ENCODE measurements at regions of chr11 and their contacts with region 1.

Region 1: GRCh38 chr11:94543695-94544645 is at the start of gene FUT4:
- DNase-seq: peak; percentile 94
- H3K4me3 Mint-ChIP-seq: peak within 1 kb of the TSS; percentile 82
- H3K27ac Mint-ChIP-seq: peak within 1 kb of the TSS; percentile 85
- H3K4me1 Mint-ChIP-seq: peaks cover 31% of the 10 kb centered on the region
- H3K27me3 Mint-ChIP-seq: no peaks in the 10 kb centered on the region
- CTCF ChIP-seq: no peak
- total RNA-seq, gene FUT4: 28.6 and 32.9 TPM in 2 replicates

Region 2: DNA sequence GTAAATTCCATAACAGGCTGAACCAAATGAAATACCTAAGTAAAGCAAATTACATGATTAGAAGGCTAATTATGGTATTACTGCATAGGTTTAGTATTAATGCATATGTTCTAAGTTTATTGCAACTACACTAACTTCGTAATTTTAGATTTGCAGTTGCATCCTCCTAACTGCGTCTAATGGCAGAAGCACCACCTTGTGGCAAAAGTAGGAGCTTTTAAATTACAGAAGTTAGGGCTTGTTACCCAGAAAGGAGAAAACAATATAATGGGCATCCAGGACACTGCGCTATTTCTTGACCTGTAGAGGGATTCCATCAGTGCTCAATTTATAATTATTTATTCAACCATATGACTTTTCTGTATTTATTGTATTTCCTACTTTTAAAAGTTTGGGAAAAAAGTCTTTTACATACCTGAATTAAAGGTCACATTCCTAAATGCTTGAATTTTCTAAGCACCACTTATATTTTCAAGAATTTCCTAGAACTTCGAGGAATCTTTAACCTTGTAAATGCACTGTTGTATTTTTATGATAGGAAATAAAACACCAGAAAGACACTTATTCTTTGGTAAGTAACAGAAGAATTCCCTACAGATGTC is 126.5 kb before region 1 on chr11:
- CTCF ChIA-PET with region 1: no interaction called
- intact Hi-C with region 1: no loop called
- DNase-seq: no peak
- H3K4me3 Mint-ChIP-seq: no peak overlapping the region
- H3K27ac Mint-ChIP-seq: no peak overlapping the region
- H3K4me1 Mint-ChIP-seq: no peaks in the 10 kb centered on the region
- H3K27me3 Mint-ChIP-seq: no peaks in the 10 kb centered on the region
- CTCF ChIP-seq: no peak

Region 3: GRCh38 chr11:94519478-94520084 is 24.4 kb before region 1 on chr11:
- CTCF ChIA-PET with region 1: interaction called, 3 read pairs
- intact Hi-C with region 1: loop called (anchors 2 kb)
- DNase-seq: no peak
- H3K4me3 Mint-ChIP-seq: no peak overlapping the region
- H3K27ac Mint-ChIP-seq: no peak overlapping the region
- H3K4me1 Mint-ChIP-seq: no peaks in the 10 kb centered on the region
- H3K27me3 Mint-ChIP-seq: no peaks in the 10 kb centered on the region
- CTCF ChIP-seq: peak; percentile 19

Region 4: GRCh38 chr11:94588371-94588952 is 44.5 kb after region 1 on chr11:
- CTCF ChIA-PET with region 1: no interaction called
- intact Hi-C with region 1: loop called (anchors 5 kb)
- DNase-seq: peak; percentile 21
- H3K4me3 Mint-ChIP-seq: no peak overlapping the region
- H3K27ac Mint-ChIP-seq: no peak overlapping the region
- H3K4me1 Mint-ChIP-seq: peaks cover 68% of the 10 kb centered on the region
- H3K27me3 Mint-ChIP-seq: no peaks in the 10 kb centered on the region
- CTCF ChIP-seq: no peak